Caco-2 (cell line): ENCODE measurements at regions of chr3 and their contacts with region 1.

Region 1: GRCh38 chr3:96813134-96813819 is 1.1 kb upstream of the EPHA6 start:
- DNase-seq: peak; percentile 83 to 90
- H3K4me3 ChIP-seq: peak overlapping the region; percentile 67
- H3K4me3 Mint-ChIP-seq: peak overlapping the region; percentile 76
- H3K27ac Mint-ChIP-seq: no peak overlapping the region
- H3K4me1 ChIP-seq: no peaks in the 10 kb centered on the region
- H3K4me1 Mint-ChIP-seq: peaks cover 7% of the 10 kb centered on the region
- H3K27me3 ChIP-seq: no peaks in the 10 kb centered on the region
- H3K27me3 Mint-ChIP-seq: no peaks in the 10 kb centered on the region
- CTCF ChIP-seq: peak; percentile 63 to 74

Region 2: DNA sequence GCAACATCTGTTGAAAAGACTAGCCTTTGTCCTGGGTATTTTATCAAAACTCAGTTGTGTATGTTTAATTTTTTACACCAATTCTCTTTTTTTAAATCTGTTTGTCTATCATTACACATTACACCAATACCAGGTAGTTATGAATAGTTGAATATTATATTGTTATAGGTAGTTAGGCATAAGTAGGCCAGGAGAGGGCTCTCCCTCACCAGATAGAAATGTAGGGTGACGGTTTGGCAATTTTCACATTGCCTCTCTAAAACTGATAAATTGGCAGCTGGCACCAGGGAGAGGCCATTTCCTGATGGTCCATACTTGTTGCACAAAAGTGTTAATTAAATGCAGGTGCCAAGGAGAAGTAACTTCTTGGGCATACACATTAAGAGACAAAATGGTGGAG is 481.9 kb before region 1 on chr3:
- CTCF ChIA-PET with region 1: no interaction called
- POLR2A ChIA-PET with region 1: no interaction called
- intact Hi-C with region 1: loop called (anchors 1 kb)
- DNase-seq: peak in 1 of 2 experiments; percentile 7
- H3K4me3 ChIP-seq: no peak overlapping the region
- H3K4me3 Mint-ChIP-seq: no peak overlapping the region
- H3K27ac Mint-ChIP-seq: no peak overlapping the region
- H3K4me1 ChIP-seq: no peaks in the 10 kb centered on the region
- H3K4me1 Mint-ChIP-seq: no peaks in the 10 kb centered on the region
- H3K27me3 ChIP-seq: no peaks in the 10 kb centered on the region
- H3K27me3 Mint-ChIP-seq: no peaks in the 10 kb centered on the region
- CTCF ChIP-seq: peak; percentile 38 to 42

Region 3: DNA sequence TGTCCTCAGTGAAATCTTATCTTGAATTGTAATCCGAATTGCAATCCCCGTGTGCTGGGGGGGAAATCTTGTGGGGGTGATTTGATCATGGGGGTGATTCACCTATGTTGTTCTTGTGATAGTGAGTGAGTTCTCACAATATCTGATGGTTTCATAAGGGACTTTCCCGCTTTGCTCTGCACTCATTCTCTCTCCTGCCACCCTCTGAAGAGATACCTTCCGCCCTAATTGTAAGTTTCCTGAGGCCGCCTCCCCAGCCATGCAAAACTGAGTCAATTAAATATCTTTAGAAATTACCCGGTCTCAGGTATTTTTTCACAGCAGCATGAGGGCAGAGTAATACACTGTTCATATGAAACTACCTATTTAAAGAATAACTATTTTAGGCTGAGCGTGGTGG is 302.9 kb before region 1 on chr3:
- CTCF ChIA-PET with region 1: no interaction called
- POLR2A ChIA-PET with region 1: no interaction called
- intact Hi-C with region 1: loop called (anchors 5 kb)
- DNase-seq: no peak
- H3K4me3 ChIP-seq: no peak overlapping the region
- H3K4me3 Mint-ChIP-seq: no peak overlapping the region
- H3K27ac Mint-ChIP-seq: no peak overlapping the region
- H3K4me1 ChIP-seq: no peaks in the 10 kb centered on the region
- H3K4me1 Mint-ChIP-seq: no peaks in the 10 kb centered on the region
- H3K27me3 ChIP-seq: no peaks in the 10 kb centered on the region
- H3K27me3 Mint-ChIP-seq: peaks cover 2% of the 10 kb centered on the region
- CTCF ChIP-seq: no peak

Region 4: GRCh38 chr3:96631050-96631449 is 182.2 kb before region 1 on chr3:
- CTCF ChIA-PET with region 1: no interaction called
- POLR2A ChIA-PET with region 1: no interaction called
- intact Hi-C with region 1: loop called (anchors 5 kb)
- DNase-seq: no peak
- H3K4me3 ChIP-seq: no peak overlapping the region
- H3K4me3 Mint-ChIP-seq: no peak overlapping the region
- H3K27ac Mint-ChIP-seq: no peak overlapping the region
- H3K4me1 ChIP-seq: no peaks in the 10 kb centered on the region
- H3K4me1 Mint-ChIP-seq: no peaks in the 10 kb centered on the region
- H3K27me3 ChIP-seq: no peaks in the 10 kb centered on the region
- H3K27me3 Mint-ChIP-seq: no peaks in the 10 kb centered on the region
- CTCF ChIP-seq: no peak

Region 5: GRCh38 chr3:96756516-96756915 is 56.8 kb before region 1 on chr3:
- CTCF ChIA-PET with region 1: no interaction called
- POLR2A ChIA-PET with region 1: no interaction called
- intact Hi-C with region 1: loop called (anchors 2 kb)
- DNase-seq: peak; percentile 69 to 70
- H3K4me3 ChIP-seq: no peak overlapping the region
- H3K4me3 Mint-ChIP-seq: peak overlapping the region; percentile 57
- H3K27ac Mint-ChIP-seq: peak overlapping the region; percentile 95
- H3K4me1 ChIP-seq: peaks cover 38% of the 10 kb centered on the region
- H3K4me1 Mint-ChIP-seq: peaks cover 24% of the 10 kb centered on the region
- H3K27me3 ChIP-seq: no peaks in the 10 kb centered on the region
- H3K27me3 Mint-ChIP-seq: no peaks in the 10 kb centered on the region
- CTCF ChIP-seq: no peak

Region 6: DNA sequence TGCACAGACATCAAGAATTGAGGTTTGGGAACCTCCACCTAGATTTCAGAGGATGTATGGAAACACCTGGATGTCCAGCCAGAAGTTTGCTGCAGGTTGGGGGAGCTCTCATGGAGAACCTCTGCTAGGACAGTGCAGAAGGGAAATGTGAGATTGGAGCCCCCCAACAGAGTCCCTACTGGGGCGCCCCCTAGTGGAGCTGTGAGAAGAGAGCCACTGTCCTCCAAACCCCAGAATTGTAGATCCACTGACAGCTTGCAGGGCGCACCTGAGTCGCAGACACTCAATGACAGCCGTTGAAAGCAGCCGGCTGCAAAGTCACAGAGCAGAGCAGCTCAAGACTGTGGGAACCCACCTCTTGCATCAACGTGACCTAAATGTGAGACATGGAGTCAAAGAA is 33.5 kb before region 1 on chr3:
- CTCF ChIA-PET with region 1: no interaction called
- POLR2A ChIA-PET with region 1: no interaction called
- intact Hi-C with region 1: no loop called
- DNase-seq: no peak
- H3K4me3 ChIP-seq: no peak overlapping the region
- H3K4me3 Mint-ChIP-seq: no peak overlapping the region
- H3K27ac Mint-ChIP-seq: no peak overlapping the region
- H3K4me1 ChIP-seq: no peaks in the 10 kb centered on the region
- H3K4me1 Mint-ChIP-seq: no peaks in the 10 kb centered on the region
- H3K27me3 ChIP-seq: no peaks in the 10 kb centered on the region
- H3K27me3 Mint-ChIP-seq: no peaks in the 10 kb centered on the region
- CTCF ChIP-seq: no peak